IMR-90 (cell line): ENCODE measurements at regions of chr18 and their contacts with region 1.

Region 1: GRCh38 chr18:11470941-11471340 is 138.5 kb upstream of the SLC35G4 start:
- DNase-seq: no peak
- ATAC-seq: no peak
- H3K4me3 ChIP-seq: no peak overlapping the region
- H3K27ac ChIP-seq: no peak overlapping the region
- H3K4me1 ChIP-seq: no peaks in the 10 kb centered on the region
- H3K27me3 ChIP-seq: peaks cover 9% of the 10 kb centered on the region
- CTCF ChIP-seq: no peak
- POLR2A ChIP-seq: no peak
- RAD21 ChIP-seq: no peak

Region 2: DNA sequence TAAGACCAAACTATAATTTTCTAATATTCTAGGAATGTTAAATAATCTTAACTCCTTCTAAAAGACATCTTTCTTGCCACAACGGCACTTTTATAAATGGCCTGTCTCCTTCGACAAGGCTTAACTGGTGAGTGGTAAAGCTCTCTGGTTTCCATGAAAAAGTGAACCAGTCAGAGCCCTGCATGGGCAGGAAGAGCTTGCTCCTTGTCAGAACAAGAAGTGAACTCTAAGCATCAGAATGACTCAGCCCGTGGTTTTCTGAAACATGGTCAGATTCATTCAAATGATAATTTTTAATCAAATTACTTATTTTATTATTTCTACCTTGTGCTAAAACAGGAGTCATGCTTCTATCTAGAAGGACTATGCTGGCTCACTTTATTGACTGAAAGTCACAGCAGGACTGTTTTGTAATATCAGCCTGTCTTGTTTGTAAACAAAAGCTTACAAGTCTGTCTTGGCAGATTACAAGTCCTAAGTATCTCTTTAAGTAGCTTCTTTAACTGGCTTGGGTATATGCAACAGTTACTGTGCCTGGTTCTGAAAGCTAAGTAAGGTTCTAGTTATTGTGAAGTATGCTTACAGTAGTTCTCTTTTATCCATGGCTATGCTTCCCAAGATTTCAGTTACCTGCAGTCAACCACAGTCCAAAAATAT is 699.8 kb before region 1 on chr18:
- CTCF ChIA-PET with region 1: no interaction called
- POLR2A ChIA-PET with region 1: no interaction called
- dilution Hi-C with region 1: no loop called
- in situ Hi-C with region 1: no loop called
- intact Hi-C with region 1: no loop called
- DNase-seq: peak; percentile 67
- ATAC-seq: peak; percentile 86
- H3K4me3 ChIP-seq: no peak overlapping the region
- H3K27ac ChIP-seq: no peak overlapping the region
- H3K4me1 ChIP-seq: peaks cover 2% of the 10 kb centered on the region; the same call in 1 of the 2 replicates
- H3K27me3 ChIP-seq: no peaks in the 10 kb centered on the region
- CTCF ChIP-seq: no peak
- POLR2A ChIP-seq: no peak
- RAD21 ChIP-seq: no peak

Region 3: GRCh38 chr18:11204020-11204419 is 266.9 kb before region 1 on chr18:
- CTCF ChIA-PET with region 1: no interaction called
- POLR2A ChIA-PET with region 1: no interaction called
- dilution Hi-C with region 1: no loop called
- in situ Hi-C with region 1: no loop called
- intact Hi-C with region 1: no loop called
- DNase-seq: no peak
- ATAC-seq: no peak
- H3K4me3 ChIP-seq: no peak overlapping the region
- H3K27ac ChIP-seq: no peak overlapping the region
- H3K4me1 ChIP-seq: no peaks in the 10 kb centered on the region
- H3K27me3 ChIP-seq: peaks cover 12% of the 10 kb centered on the region
- CTCF ChIP-seq: no peak
- POLR2A ChIP-seq: no peak
- RAD21 ChIP-seq: no peak

Region 4: DNA sequence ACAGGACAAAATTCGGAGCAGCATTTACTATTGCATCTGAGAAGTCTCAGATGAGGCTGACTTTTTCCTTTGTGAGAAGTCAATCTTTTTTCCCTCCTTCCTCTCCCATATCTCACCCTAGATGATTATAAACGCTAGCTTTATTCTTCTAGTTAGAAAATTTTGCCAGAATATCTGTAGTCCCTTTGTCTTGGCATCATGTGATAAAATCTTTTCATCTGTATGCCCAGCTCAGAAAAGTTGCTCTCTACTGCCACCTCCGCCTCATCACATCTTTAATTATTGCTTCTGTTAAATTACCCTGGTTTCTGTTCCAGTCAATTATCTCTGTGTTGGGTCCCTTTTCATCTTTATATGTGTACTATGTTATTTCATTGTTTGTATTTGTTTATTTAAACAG is 72.3 kb before region 1 on chr18:
- CTCF ChIA-PET with region 1: no interaction called
- POLR2A ChIA-PET with region 1: no interaction called
- dilution Hi-C with region 1: no loop called
- in situ Hi-C with region 1: no loop called
- intact Hi-C with region 1: no loop called
- DNase-seq: peak; percentile 1
- ATAC-seq: no peak
- H3K4me3 ChIP-seq: no peak overlapping the region
- H3K27ac ChIP-seq: no peak overlapping the region
- H3K4me1 ChIP-seq: no peaks in the 10 kb centered on the region
- H3K27me3 ChIP-seq: no peaks in the 10 kb centered on the region
- CTCF ChIP-seq: peak; percentile 21; the same call in 1 of the 2 replicates
- POLR2A ChIP-seq: no peak
- RAD21 ChIP-seq: no peak

Region 5: GRCh38 chr18:11425211-11425610 is 45.7 kb before region 1 on chr18:
- CTCF ChIA-PET with region 1: no interaction called
- POLR2A ChIA-PET with region 1: no interaction called
- dilution Hi-C with region 1: no loop called
- in situ Hi-C with region 1: no loop called
- intact Hi-C with region 1: loop called (anchors 1 kb)
- DNase-seq: peak; percentile 12
- ATAC-seq: no peak
- H3K4me3 ChIP-seq: no peak overlapping the region
- H3K27ac ChIP-seq: no peak overlapping the region
- H3K4me1 ChIP-seq: no peaks in the 10 kb centered on the region
- H3K27me3 ChIP-seq: no peaks in the 10 kb centered on the region
- CTCF ChIP-seq: no peak
- POLR2A ChIP-seq: no peak
- RAD21 ChIP-seq: no peak

Region 6: DNA sequence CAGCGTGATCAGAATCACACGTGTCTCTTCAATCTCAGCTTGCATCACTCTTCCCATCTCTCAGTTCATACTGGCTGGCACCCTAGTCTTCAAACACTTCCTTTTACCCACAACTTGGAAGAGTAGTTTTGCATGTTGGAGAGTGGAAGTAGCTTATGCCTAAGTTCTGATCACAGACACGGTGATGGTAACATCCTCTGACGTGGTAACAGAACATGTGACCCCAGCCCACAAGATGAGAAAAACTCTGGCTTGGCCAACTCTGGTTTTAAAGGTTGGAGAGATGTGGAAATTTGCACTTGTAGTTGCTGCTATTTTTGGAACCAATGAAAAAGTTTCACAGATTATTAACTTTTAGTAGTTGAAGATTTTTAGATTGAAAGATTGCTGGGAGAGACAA is 16.9 kb before region 1 on chr18:
- CTCF ChIA-PET with region 1: no interaction called
- POLR2A ChIA-PET with region 1: no interaction called
- dilution Hi-C with region 1: no loop called
- in situ Hi-C with region 1: no loop called
- intact Hi-C with region 1: no loop called
- DNase-seq: no peak
- ATAC-seq: no peak
- H3K4me3 ChIP-seq: no peak overlapping the region
- H3K27ac ChIP-seq: no peak overlapping the region
- H3K4me1 ChIP-seq: no peaks in the 10 kb centered on the region
- H3K27me3 ChIP-seq: no peaks in the 10 kb centered on the region
- CTCF ChIP-seq: no peak
- POLR2A ChIP-seq: no peak
- RAD21 ChIP-seq: no peak